Posterior cingulate gyrus (tissue), 11 donors: ENCODE measurements at regions of chr7 and their contacts with region 1.

Region 1: GRCh38 chr7:65006094-65006992 is at the start of gene ERV3-1:
- DNase-seq: peak; percentile 96 to 100 (median 98)

Region 2: DNA sequence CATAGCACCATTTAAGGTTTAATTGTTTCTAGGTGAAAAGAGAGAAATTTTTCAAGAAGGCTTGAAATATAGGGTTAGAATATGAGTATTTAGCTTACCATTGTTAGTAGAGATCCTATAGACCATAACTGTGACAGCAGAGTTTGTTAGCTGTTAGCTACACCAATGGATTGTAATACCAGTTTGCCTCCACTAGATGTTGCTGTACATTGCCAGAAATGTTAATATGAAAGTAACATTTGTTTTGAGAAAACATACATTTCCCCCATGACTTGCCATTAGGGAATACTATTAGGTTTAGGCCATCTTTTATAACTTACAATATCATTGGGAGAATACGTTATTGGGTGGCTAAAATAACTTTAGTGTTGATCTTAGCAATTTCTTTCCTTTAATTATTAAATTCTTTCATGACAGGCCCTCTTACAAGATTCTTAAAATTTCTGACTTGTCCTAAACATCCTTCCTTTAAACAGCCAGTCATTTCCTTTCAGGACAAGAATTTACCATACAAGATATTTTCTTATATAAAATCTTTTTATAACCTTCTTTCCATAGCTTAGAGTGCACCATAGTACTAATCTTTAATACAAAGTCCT is 55.0 kb before region 1 on chr7:
- intact Hi-C with region 1: no loop called
- DNase-seq: no peak

Region 3: DNA sequence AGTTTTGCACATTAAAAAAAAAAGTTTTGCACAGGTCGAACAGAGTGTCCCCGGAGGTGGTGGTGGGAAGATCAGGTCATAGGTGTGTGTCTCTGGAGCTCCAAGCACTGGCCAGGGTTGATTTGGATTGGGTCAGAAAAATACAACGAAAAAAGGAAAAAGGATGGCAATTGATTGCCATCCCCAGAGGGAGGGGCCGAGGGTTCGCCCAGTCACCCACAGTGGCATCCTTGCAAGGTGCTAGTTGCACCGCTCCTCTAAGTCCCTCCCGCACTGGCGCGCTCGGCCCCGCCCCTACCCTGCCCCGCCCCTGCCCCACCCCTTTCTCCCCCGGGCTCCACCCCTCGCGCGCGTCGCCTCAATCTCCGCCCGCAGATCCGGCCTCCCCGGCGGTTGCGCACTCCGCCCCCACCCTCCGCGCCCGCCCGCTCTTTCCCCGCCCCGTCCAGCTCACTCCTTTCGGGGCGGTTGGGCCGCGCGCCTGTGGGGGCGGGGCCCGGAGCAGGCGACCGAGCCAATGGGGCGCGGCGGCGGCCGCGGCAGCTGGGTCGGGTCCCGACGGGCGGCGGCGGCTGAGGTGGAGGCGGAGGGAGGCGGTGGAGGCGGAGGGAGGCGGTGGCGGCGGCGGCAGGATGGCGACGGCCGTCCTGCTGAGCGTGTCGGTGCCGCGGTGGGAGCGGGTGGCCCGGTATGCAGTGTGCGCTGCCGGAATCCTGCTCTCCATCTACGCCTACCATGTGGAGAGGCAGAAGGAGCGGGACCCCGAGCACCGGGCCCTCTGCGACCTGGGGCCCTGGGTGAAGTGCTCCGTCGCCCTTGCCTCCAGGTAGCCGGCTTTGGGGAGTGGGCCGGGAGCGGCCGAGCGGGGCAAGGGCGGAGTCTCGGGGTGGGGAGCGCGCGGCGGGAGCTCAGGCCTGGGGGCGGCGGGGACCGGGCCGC is 31.7 kb after region 1 on chr7:
- intact Hi-C with region 1: loop called (anchors 1 kb)
- DNase-seq: peak; percentile 80 to 98 (median 90)